HCT116 (cell line): ENCODE measurements at regions of chr1 and their contacts with region 1.

Region 1: DNA sequence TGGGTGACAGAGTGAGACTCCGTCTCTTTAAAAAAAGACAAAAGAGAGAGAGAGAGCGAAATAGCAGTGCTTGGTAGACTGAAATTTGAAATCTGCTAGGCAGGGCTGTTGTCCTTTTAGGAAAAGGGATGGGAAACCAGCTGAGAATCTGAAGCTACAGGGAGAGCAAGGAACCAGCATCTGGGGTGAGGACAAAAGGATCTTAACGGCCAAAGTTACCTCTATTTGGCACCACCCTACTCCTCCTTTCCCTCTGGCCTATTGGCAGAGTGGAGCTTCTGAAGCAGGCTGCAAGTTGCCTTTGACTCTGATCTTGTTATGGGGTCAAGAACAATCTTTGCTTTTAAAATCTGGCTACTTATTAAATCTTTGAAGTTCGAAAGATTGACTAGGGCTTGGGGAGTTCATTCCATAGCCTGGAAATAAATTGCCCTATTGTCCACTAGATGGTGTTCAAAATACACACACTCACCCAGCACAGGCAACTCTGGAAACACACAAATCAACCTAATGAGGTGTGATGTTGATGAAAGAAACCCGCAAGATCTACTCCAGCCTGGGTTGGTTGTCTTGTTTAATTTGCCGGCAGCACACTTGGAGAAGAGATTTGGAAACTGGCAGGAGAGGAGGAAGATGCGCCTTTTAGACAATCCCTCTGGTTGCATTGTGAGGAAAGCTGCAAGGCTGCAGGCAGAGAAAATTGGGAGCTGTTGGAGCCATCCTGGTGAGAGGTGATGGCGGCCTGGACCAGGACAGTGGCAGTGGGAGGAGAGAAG is 16.5 kb upstream of the PARP1 start:
- DNase-seq: peak; percentile 28
- ATAC-seq: peak; percentile 92
- H3K4me3 ChIP-seq: no peak overlapping the region
- H3K27ac ChIP-seq: no peak overlapping the region
- H3K4me1 ChIP-seq: peaks cover 0 to 7% of the 10 kb centered on the region in 2 experiments; a peak in 2 of 4 replicates
- H3K27me3 ChIP-seq: no peaks in the 10 kb centered on the region
- CTCF ChIP-seq: peak; percentile 63 to 75 (median 75)
- POLR2A ChIP-seq: no peak
- RAD21 ChIP-seq: peak; percentile 88

Region 2: GRCh38 chr1:226407497-226408284 is 16.7 kb before region 1 on chr1 and contains the start of gene PARP1:
- CTCF ChIA-PET with region 1: interaction called, 10 read pairs
- POLR2A ChIA-PET with region 1: interaction called, 4 read pairs
- RAD21 ChIA-PET with region 1: no interaction called
- intact Hi-C with region 1: no loop called
- DNase-seq: peak; percentile 71
- ATAC-seq: peak; percentile 92
- H3K4me3 ChIP-seq: peak within 1 kb of the TSS; percentile 70 to 73
- H3K27ac ChIP-seq: peak within 1 kb of the TSS; percentile 79
- H3K4me1 ChIP-seq: peaks cover 8 to 38% of the 10 kb centered on the region in 2 experiments; a peak in 3 of 4 replicates
- H3K27me3 ChIP-seq: no peaks in the 10 kb centered on the region
- CTCF ChIP-seq: peak in 2 of 3 experiments; percentile 43 to 61; a peak in 3 of 6 replicates
- POLR2A ChIP-seq: peak; percentile 79
- RAD21 ChIP-seq: no peak
- total RNA-seq, gene PARP1: 213 TPM

Region 3: DNA sequence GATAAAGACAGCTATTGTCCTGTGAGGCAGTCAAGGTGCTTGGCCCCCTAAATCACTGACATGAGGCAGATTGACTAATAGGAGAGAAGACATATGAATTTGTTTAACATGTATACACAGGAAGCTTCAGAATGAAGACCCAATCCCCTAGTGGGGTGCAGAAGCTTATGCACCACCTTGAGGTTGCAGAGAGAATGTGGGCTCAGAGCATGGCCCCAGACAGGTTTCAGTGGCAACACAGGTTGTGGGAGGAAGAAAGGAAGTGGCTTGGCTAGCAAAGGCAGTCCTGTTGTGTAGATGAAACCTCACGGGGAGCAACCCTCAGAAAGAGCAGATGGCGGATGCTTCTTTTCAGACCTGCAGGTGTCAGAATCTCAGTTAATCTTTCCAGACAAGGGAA is 20.5 kb after region 1 on chr1:
- CTCF ChIA-PET with region 1: no interaction called
- POLR2A ChIA-PET with region 1: no interaction called
- RAD21 ChIA-PET with region 1: no interaction called
- intact Hi-C with region 1: no loop called
- DNase-seq: no peak
- ATAC-seq: no peak
- H3K4me3 ChIP-seq: no peak overlapping the region
- H3K27ac ChIP-seq: no peak overlapping the region
- H3K4me1 ChIP-seq: peaks cover 19 to 47% of the 10 kb centered on the region in 2 experiments
- H3K27me3 ChIP-seq: no peaks in the 10 kb centered on the region
- CTCF ChIP-seq: no peak; a peak in 1 of 6 replicates
- POLR2A ChIP-seq: no peak
- RAD21 ChIP-seq: 0 out of 2 replicates have a peak, but pooled peaks have one; percentile 6

Region 4: DNA sequence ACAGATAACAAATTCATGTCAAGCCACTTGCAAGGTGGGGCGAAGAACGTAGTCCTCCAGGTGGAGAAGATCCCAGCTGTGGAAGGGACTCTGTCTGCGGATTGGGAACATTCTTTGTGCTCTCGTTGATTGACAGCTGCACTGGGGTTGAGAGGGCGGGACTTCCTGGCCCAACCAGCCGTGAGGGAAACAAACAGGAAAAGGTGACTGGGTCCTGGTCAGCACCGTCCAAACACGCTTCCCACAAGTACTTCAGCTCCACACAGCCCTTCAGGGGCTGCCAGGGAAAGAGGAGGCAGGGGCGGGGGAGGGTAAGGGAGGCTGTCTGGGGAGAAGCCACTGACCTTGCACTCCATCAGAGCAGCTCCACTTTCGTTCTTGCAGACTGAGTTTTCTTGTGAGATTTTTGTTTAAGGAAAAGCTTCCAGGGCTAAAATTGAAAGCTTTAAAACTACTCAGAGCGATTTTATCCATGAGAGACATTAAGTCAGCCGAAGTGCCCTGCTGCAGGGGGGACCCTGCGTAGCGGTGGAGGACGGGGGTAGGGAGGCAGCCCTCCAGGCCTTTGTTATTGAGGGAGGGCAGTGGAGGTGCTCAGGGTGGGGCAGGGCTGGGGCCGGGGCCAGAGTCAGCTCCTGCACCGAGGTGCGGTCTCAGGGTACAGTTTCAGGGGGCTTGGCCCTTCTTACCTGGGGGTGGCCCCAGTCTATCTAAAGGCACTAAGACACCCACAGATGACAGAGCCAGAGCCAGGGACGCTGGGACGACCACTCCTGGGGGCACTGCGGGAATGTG is 102.6 kb after region 1 on chr1:
- CTCF ChIA-PET with region 1: no interaction called
- POLR2A ChIA-PET with region 1: no interaction called
- RAD21 ChIA-PET with region 1: no interaction called
- intact Hi-C with region 1: no loop called
- DNase-seq: peak; percentile 35
- ATAC-seq: peak; percentile 97
- H3K4me3 ChIP-seq: peak overlapping the region; percentile 23 to 27; a peak in 3 of 4 replicates
- H3K27ac ChIP-seq: peak overlapping the region; percentile 33; the same call in 1 of the 2 replicates
- H3K4me1 ChIP-seq: peaks cover 2 to 11% of the 10 kb centered on the region in 2 experiments; a peak in 1 of 4 replicates
- H3K27me3 ChIP-seq: no peaks in the 10 kb centered on the region
- CTCF ChIP-seq: no peak
- POLR2A ChIP-seq: no peak
- RAD21 ChIP-seq: no peak

Region 5: DNA sequence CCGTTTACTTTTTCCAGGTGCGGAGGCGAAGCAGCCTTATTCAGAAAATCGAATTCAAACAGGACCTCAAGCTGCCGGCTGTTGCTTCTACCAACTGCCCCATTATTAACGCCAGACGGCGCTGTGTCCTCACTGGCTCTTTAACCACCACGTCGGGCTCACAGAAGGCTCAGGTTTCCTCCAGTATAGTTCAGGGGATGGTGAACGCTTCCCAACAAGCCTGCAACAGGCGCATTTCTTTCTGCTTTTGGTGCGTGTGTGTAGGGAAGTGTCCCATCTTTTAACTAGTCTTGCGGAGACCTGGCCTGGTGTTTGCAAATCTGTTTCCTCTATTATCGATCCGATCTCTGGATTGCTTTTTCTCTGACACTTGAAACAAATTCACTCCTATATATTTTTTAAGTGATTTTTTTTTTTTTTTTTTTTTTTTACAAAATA is 123.4 kb after region 1 on chr1:
- CTCF ChIA-PET with region 1: interaction called, 6 read pairs
- POLR2A ChIA-PET with region 1: no interaction called
- RAD21 ChIA-PET with region 1: interaction called in 1 of 2 experiments, 3 read pairs
- intact Hi-C with region 1: loop called (anchors 2 kb)
- DNase-seq: peak; percentile 79
- ATAC-seq: peak; percentile 96
- H3K4me3 ChIP-seq: no peak overlapping the region
- H3K27ac ChIP-seq: no peak overlapping the region
- H3K4me1 ChIP-seq: peaks cover 0 to 21% of the 10 kb centered on the region in 2 experiments; a peak in 2 of 4 replicates
- H3K27me3 ChIP-seq: peaks cover 3% of the 10 kb centered on the region; the same call in 1 of the 2 replicates
- CTCF ChIP-seq: peak; percentile 91 to 98 (median 97)
- POLR2A ChIP-seq: no peak
- RAD21 ChIP-seq: peak; percentile 91

Region 6: DNA sequence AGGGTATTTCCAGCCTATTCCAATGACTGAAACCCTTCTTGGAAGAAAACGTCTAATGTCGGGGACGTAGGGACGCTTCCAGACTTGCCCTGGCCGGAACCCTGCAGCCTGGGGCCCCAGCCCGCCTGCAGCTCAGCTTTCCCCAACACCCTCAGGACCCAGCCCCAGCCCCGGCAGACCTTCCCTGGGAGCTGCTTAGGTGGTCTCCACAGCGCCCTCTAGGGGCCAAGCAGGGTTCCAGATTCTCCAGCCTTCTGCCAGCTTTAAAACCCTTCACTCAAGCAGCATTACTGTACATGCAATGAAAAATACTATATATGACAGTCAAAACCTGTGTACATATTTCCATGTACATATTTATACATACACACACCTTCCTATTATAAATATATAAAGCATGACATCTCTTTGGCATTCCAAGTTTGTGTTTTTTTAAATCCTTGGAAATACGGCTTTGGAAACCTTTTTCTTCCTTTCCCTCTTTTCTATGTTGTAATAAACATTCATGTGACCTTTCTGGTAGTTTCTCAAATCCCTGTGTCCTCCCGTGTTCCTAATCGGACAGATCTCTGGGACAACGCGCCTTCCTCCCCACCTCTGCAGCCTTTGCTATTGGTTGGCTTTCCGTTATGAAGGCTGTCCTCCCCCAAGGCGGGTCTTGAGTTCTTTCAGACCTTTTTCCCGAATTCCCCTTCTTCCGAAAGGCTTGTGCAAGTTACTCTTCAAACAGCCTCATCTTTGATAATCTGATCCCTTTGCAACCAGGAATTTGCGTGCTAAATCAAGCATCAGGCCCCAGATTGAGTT is 184.5 kb after region 1 on chr1:
- CTCF ChIA-PET with region 1: interaction called, 9 read pairs
- POLR2A ChIA-PET with region 1: no interaction called
- RAD21 ChIA-PET with region 1: no interaction called
- intact Hi-C with region 1: loop called (anchors 1 kb)
- DNase-seq: peak; percentile 51
- ATAC-seq: peak; percentile 91
- H3K4me3 ChIP-seq: no peak overlapping the region
- H3K27ac ChIP-seq: no peak overlapping the region
- H3K4me1 ChIP-seq: no peaks in the 10 kb centered on the region
- H3K27me3 ChIP-seq: no peaks in the 10 kb centered on the region; the same call in 1 of the 2 replicates
- CTCF ChIP-seq: peak; percentile 77 to 93 (median 88); a peak in 5 of 6 replicates
- POLR2A ChIP-seq: no peak
- RAD21 ChIP-seq: peak; percentile 69